ENCODE measurements at regions of chr11 and their contacts with region 1.

Region 1: GRCh38 chr11:12888525-12889158 is 120.5 kb upstream of the RASSF10 start:
- DNase-seq: peak; percentile 82
- H3K4me3 Mint-ChIP-seq: no peak overlapping the region
- H3K27ac Mint-ChIP-seq: peak overlapping the region; percentile 33
- H3K4me1 Mint-ChIP-seq: no peaks in the 10 kb centered on the region
- H3K27me3 Mint-ChIP-seq: no peaks in the 10 kb centered on the region
- CTCF ChIP-seq: peak; percentile 67

Region 2: DNA sequence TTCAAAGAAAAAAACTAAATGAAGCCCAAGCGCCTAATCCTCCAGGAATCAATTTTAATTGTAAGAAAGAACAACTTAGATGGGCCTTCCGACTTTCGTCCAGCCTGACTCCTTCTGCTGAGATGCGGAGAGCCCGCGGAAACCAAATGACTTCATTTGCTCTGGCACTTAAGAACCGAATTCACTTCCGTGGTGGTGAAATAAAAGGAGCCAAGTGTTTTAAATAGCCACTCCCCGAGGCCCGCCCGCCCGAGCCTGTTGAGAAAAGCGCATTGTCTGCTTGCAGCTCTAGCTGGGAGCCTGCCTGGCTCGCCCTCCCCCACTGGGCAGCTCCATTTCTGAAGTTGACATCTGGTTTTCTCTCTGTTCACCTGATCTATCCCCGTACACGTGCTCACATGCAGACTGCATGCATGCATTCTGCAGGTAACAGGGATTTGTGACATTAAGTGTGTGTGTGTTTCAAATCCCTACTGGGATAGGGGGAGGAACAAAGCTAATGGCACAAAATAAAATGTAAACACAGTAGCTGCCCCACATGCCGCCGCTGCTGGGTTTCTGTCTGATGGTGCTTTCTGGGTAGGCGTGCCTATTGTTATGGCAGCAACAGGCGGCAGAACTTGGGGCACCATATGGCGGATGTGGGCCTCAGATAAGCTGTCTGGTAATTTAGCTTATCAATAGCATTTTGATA is 208.2 kb before region 1 on chr11:
- CTCF ChIA-PET with region 1: interaction called, 6 read pairs
- intact Hi-C with region 1: loop called (anchors 10 kb)
- DNase-seq: peak; percentile 90
- H3K4me3 Mint-ChIP-seq: peak overlapping the region; percentile 59
- H3K27ac Mint-ChIP-seq: peak overlapping the region; percentile 79
- H3K4me1 Mint-ChIP-seq: peaks cover 71% of the 10 kb centered on the region
- H3K27me3 Mint-ChIP-seq: no peaks in the 10 kb centered on the region
- CTCF ChIP-seq: no peak

Region 3: DNA sequence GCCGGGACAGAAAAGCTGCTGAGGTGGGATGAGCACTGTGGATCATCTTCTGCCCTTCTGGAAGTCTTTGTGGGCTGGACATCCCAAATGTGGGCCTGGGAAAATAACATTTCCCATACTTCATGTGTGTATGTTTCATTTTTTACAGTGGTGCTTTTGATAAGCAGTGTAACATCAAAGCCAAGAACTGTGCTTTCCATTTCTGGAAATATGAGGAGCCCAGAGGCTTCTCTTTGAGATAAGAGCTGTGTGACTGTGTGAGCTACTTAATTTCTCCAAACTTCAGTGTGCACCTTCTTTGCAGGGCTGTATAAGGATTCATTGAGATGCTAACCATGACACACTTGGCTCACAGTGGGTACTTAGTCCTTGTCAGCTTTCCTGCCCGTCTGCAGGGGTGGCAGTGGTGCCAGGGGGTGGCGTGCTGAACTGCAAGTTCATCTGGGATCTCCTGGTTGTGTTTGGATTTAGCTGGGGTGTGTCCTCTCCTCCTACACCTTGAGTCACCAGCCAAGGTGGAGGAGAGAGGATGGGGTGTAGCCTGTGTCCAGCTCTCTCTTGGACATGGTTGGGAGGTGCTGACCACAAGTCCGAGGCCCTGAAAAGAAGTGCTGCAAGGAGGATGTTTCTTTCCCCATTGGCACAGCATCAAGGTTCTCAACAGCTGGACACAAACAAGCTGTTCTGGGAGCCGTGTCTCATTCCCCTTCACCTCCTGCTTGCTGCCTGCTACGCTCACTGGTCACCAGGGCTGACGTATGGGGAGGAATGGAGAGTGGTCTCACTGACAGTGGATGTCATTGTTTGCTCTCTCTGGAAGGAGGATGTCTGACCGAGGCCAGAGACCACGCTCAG is 75.0 kb before region 1 on chr11:
- CTCF ChIA-PET with region 1: interaction called, 10 read pairs
- intact Hi-C with region 1: no loop called
- DNase-seq: peak; percentile 42
- H3K4me3 Mint-ChIP-seq: no peak overlapping the region
- H3K27ac Mint-ChIP-seq: no peak overlapping the region
- H3K4me1 Mint-ChIP-seq: peaks cover 61% of the 10 kb centered on the region
- H3K27me3 Mint-ChIP-seq: no peaks in the 10 kb centered on the region
- CTCF ChIP-seq: no peak

Region 4: GRCh38 chr11:12827929-12828812 is 60.5 kb before region 1 on chr11:
- CTCF ChIA-PET with region 1: interaction called, 8 read pairs
- intact Hi-C with region 1: loop called (anchors 5 kb)
- DNase-seq: peak; percentile 47
- H3K4me3 Mint-ChIP-seq: peak overlapping the region; percentile 79
- H3K27ac Mint-ChIP-seq: peak overlapping the region; percentile 89
- H3K4me1 Mint-ChIP-seq: peaks cover 67% of the 10 kb centered on the region
- H3K27me3 Mint-ChIP-seq: no peaks in the 10 kb centered on the region
- CTCF ChIP-seq: no peak

Region 5: DNA sequence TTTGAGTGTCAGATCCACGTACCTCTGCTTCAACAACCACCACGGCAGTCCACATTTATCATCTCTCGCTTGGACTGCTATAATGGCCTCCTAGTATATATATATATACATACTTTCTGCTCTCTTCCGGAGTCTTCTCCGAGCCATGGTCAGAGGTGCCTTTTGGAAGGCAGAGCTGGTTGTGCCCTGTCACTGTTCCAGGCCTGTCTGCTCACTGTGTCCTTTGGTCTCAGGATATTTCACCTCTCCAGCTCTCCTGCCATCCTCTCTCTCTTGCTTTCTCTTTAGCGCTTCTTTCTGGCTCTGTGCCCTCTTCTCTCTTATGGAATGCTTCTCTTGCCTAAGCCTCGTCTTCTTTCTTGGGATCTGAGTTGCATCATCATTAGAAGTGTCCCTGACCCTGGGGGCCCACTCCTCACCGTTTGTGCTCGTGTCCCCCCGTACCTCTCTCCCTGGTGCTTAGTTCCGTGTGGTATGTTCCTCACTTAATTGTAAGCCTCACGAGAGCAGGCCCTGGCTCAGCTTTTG is 34.4 kb after region 1 on chr11:
- CTCF ChIA-PET with region 1: interaction called, 12 read pairs
- intact Hi-C with region 1: no loop called
- DNase-seq: no peak
- H3K4me3 Mint-ChIP-seq: no peak overlapping the region
- H3K27ac Mint-ChIP-seq: no peak overlapping the region
- H3K4me1 Mint-ChIP-seq: no peaks in the 10 kb centered on the region
- H3K27me3 Mint-ChIP-seq: no peaks in the 10 kb centered on the region
- CTCF ChIP-seq: no peak

Region 6: GRCh38 chr11:13076966-13077365 is 188.3 kb after region 1 on chr11:
- CTCF ChIA-PET with region 1: no interaction called
- intact Hi-C with region 1: no loop called
- DNase-seq: peak; percentile 53
- H3K4me3 Mint-ChIP-seq: no peak overlapping the region
- H3K27ac Mint-ChIP-seq: peak overlapping the region; percentile 9
- H3K4me1 Mint-ChIP-seq: peaks cover 55% of the 10 kb centered on the region
- H3K27me3 Mint-ChIP-seq: no peaks in the 10 kb centered on the region
- CTCF ChIP-seq: no peak